ENCODE measurements at regions of chr20 and their contacts with region 1.

Region 1: DNA sequence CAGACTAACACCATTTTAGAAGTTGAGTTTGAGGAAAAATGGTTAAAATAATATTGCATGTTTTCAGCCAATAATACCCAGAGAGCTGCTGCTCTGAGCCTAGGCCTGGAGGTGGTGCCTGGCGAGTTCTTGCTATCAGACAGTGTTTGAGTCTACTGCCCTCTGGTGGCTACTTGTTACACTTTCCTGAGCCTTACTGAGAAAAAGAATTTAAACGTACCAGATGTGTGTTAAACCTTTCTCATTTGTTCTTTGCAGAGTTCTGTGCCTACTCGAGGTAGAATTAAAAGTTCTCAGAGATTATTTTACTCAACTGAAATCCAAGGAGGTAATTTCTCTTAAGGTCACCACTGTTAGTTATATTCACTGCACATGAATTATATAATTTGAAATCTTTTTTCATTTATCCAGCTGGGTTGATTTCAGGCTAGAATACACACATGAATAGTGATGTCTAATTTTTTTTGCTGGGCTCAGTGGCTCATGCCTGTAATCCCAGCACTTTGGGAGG is 38.2 kb downstream of the SHLD1 start:
- DNase-seq: no peak
- ATAC-seq: peak; percentile 99
- H3K4me3 Mint-ChIP-seq: no peak overlapping the region
- H3K27ac Mint-ChIP-seq: no peak overlapping the region
- H3K4me1 Mint-ChIP-seq: peaks cover 15% of the 10 kb centered on the region
- H3K27me3 Mint-ChIP-seq: no peaks in the 10 kb centered on the region
- CTCF ChIP-seq: no peak

Region 2: GRCh38 chr20:5557123-5557522 is 231.3 kb before region 1 on chr20:
- CTCF ChIA-PET with region 1: interaction called, 38 read pairs
- POLR2A ChIA-PET with region 1: no interaction called
- intact Hi-C with region 1: loop called (anchors 1 kb)
- DNase-seq: no peak
- ATAC-seq: peak; percentile 66
- H3K4me3 Mint-ChIP-seq: no peak overlapping the region
- H3K27ac Mint-ChIP-seq: no peak overlapping the region
- H3K4me1 Mint-ChIP-seq: peaks cover 2% of the 10 kb centered on the region
- H3K27me3 Mint-ChIP-seq: no peaks in the 10 kb centered on the region
- CTCF ChIP-seq: no peak

Region 3: DNA sequence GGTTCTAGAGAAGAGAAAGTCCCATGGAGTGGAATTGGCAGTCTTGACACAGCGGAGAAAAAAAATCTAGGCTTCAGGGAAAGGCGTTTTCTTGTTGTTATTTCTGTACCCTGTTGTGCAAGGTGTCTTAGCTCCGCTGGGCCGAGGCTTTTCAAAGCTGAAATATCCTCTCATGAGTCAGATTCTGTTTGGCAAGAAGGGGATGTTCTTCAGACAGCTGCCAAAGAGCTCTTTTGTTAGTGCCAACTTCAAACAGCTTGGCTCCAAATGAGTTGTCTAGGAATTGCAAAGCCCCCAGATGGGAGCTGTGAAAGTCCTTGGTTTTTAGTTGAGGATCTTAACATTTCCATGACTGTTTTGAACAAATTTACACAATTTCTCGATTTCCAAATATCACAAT is 219.8 kb after region 1 on chr20:
- CTCF ChIA-PET with region 1: interaction called, 3 read pairs
- POLR2A ChIA-PET with region 1: no interaction called
- intact Hi-C with region 1: loop called (anchors 1 kb)
- DNase-seq: no peak
- ATAC-seq: no peak
- H3K4me3 Mint-ChIP-seq: no peak overlapping the region
- H3K27ac Mint-ChIP-seq: no peak overlapping the region
- H3K4me1 Mint-ChIP-seq: peaks cover 24% of the 10 kb centered on the region
- H3K27me3 Mint-ChIP-seq: no peaks in the 10 kb centered on the region
- CTCF ChIP-seq: no peak

Region 4: GRCh38 chr20:6074145-6074561 is 285.7 kb after region 1 on chr20:
- CTCF ChIA-PET with region 1: no interaction called
- POLR2A ChIA-PET with region 1: no interaction called
- intact Hi-C with region 1: loop called (anchors 5 kb)
- DNase-seq: no peak
- ATAC-seq: no peak
- H3K4me3 Mint-ChIP-seq: no peak overlapping the region
- H3K27ac Mint-ChIP-seq: no peak overlapping the region
- H3K4me1 Mint-ChIP-seq: no peaks in the 10 kb centered on the region
- H3K27me3 Mint-ChIP-seq: peaks cover 3% of the 10 kb centered on the region
- CTCF ChIP-seq: no peak

Measured in activated B cell treated with CpG ODN at 0.5 μM for 24 hours (primary cell).